ENCODE measurements at regions of chr4 and their contacts with region 1.

Region 1: DNA sequence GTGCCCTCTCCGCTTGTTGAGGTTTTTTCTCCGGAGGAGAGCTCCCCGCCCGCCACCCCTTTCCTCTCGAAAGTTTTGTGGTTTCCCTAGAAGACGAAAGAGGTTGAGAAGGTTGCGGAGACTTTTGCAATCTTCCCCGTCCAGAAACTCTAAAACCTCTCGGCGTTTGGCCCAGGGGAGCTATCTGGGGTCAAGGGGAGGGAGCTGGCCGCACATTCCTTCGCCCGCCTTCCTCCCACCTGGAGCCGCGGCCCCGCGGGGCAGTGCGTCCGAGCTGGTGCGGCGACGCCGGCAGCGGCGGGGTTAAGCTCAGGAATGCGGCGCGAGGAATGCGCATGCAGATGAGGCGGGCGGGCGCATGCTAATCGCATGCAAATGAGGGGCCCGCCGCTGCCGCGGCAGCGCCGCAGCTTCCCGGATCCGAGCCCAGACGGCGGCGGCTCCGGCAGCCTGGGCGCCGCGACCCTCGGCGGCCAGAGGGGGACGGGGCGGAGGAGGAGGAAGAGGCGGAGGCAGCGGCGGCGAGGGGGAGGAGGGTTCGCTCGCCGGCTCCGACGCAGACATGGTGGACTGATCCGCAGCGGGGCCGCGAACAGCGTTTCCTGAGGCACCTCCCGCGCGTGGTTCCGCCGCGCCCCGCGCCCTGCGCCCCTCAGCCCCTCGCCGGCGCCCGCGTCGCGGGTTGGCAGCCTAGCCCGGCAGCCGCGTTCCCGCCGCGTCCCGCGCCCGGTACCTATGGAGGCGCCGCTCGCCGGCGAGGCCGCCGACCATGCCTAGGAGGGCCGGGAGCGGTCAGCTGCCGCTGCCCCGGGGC is at the start of gene WWC2:
- DNase-seq: peak; percentile 92
- ATAC-seq: peak; percentile 82
- H3K4me3 ChIP-seq: peak within 1 kb of the TSS; percentile 90
- H3K27ac ChIP-seq: peak within 1 kb of the TSS; percentile 92
- H3K4me1 ChIP-seq: peaks cover 4% of the 10 kb centered on the region
- H3K27me3 ChIP-seq: no peaks in the 10 kb centered on the region
- CTCF ChIP-seq: 0 out of 2 replicates have a peak, but pooled peaks have one; percentile 12
- POLR2A ChIP-seq: peak; percentile 68; the same call in 1 of the 2 replicates
- RAD21 ChIP-seq: peak; percentile 2; the same call in 1 of the 2 replicates
- total RNA-seq, gene WWC2: 27.4 and 28.1 TPM in 2 replicates

Region 2: DNA sequence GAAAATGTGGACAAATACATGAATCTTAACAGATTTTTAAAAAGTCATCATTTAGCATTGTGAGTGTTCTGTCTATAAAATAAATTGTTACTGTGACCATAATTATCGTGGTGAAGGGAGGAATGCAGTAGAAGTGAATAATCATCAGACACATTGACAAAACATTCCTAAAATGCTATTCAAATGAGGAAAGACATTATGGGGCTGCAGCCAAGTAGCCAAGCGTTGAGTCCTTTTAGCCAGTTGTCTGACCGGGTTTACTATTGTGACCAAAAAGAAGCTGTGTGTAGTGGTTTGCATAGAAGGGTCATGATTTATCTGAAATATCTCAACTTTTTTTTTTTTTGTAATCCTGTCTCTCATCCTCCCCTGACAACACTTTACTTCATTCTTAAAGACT is 19.7 kb after region 1 on chr4:
- CTCF ChIA-PET with region 1: no interaction called
- POLR2A ChIA-PET with region 1: no interaction called
- dilution Hi-C with region 1: no loop called
- in situ Hi-C with region 1: no loop called
- intact Hi-C with region 1: loop called (anchors 2 kb)
- DNase-seq: peak; percentile 87
- ATAC-seq: peak; percentile 84
- H3K4me3 ChIP-seq: no peak overlapping the region
- H3K27ac ChIP-seq: no peak overlapping the region
- H3K4me1 ChIP-seq: peaks cover 9% of the 10 kb centered on the region
- H3K27me3 ChIP-seq: no peaks in the 10 kb centered on the region
- CTCF ChIP-seq: no peak
- POLR2A ChIP-seq: no peak
- RAD21 ChIP-seq: no peak

Region 3: GRCh38 chr4:183142571-183143550 is 43.9 kb after region 1 on chr4:
- CTCF ChIA-PET with region 1: no interaction called
- POLR2A ChIA-PET with region 1: interaction called, 3 read pairs
- dilution Hi-C with region 1: no loop called
- in situ Hi-C with region 1: no loop called
- intact Hi-C with region 1: loop called (anchors 5 kb)
- DNase-seq: peak; percentile 47
- ATAC-seq: 0 out of 2 replicates have a peak, but pooled peaks have one; percentile 29
- H3K4me3 ChIP-seq: no peak overlapping the region
- H3K27ac ChIP-seq: no peak overlapping the region
- H3K4me1 ChIP-seq: peaks cover 17% of the 10 kb centered on the region
- H3K27me3 ChIP-seq: no peaks in the 10 kb centered on the region
- CTCF ChIP-seq: no peak
- POLR2A ChIP-seq: no peak
- RAD21 ChIP-seq: no peak

Region 4: DNA sequence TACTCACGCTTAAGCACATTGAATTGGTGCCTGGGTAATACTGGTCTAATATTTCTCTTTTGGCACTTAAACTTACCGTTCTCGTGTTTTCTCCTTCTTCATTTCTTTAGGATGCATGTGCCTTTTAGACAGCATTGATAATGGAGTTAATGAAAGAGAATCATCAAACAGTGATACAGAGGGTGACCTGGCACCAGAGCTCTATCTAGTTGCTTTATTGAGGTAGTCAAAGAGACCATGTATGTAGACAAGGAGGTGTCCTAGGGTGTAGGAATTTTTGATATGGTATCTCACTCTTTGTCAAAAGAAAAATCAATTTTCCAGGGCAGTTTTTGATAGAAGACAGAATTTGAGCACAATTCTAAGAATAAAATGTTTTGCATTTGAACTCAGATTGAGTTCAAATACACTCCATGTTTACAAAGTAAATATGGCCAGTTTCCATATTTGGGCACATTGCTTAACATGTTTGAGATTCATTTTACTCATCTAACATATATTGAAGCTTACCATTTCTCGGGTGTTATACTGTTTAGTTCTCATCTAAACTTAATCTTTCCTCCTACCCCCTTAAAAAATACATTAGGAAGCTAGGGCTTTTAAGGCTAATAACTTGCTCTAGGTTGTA is 92.1 kb after region 1 on chr4:
- CTCF ChIA-PET with region 1: no interaction called
- POLR2A ChIA-PET with region 1: no interaction called
- dilution Hi-C with region 1: no loop called
- in situ Hi-C with region 1: no loop called
- intact Hi-C with region 1: no loop called
- DNase-seq: no peak
- ATAC-seq: no peak
- H3K4me3 ChIP-seq: no peak overlapping the region
- H3K27ac ChIP-seq: no peak overlapping the region
- H3K4me1 ChIP-seq: peaks cover 3% of the 10 kb centered on the region; the same call in 1 of the 2 replicates
- H3K27me3 ChIP-seq: no peaks in the 10 kb centered on the region
- CTCF ChIP-seq: no peak
- POLR2A ChIP-seq: no peak
- RAD21 ChIP-seq: no peak

Region 5: DNA sequence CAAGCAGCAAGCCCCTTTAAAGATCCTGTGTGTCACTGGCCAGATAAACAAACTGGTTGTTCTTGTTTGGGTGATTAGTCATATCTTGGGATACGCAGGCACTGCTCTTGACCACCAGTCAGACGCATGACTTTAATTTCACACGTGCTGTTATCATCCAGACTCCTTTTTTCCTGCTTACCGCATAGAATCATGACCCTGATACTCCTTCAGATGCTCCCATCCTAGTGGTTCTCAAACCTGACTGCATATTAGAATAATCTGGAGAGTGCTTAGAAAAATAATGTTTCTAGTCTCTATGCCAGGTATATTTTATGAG is 142.4 kb after region 1 on chr4:
- CTCF ChIA-PET with region 1: no interaction called
- POLR2A ChIA-PET with region 1: no interaction called
- dilution Hi-C with region 1: no loop called
- in situ Hi-C with region 1: no loop called
- intact Hi-C with region 1: loop called (anchors 2 kb)
- DNase-seq: peak; percentile 93
- ATAC-seq: peak; percentile 84
- H3K4me3 ChIP-seq: no peak overlapping the region
- H3K27ac ChIP-seq: no peak overlapping the region
- H3K4me1 ChIP-seq: peaks cover 12% of the 10 kb centered on the region; the same call in 1 of the 2 replicates
- H3K27me3 ChIP-seq: no peaks in the 10 kb centered on the region
- CTCF ChIP-seq: no peak
- POLR2A ChIP-seq: no peak
- RAD21 ChIP-seq: no peak

Measured in IMR-90 (cell line).